ENCODE measurements at regions of chrX and their contacts with region 1.

Region 1: DNA sequence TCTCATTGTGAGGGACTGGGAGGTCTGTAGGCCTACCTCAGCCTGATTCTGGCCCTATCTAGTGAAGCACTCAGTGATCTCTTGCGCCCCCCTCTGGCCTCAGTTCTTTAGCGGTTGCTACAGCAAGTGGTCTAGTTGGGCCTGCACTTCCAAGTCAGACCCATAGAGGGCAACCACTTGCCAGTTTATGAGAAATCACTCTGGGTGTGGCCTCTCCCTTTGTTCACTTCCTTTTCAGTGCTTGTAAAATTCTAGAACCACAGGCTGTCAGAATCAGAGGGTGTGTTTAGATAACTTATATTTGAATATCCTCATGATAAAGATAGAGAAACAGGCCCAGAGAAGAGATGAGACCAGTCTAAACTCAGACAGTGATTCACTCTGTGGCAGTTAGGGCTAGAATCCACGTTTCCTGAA is 60.9 kb upstream of the LAS1L start:
- DNase-seq: peak; percentile 84 to 96 (median 85)
- ATAC-seq: peak; percentile 96
- H3K4me3 ChIP-seq: no peak overlapping the region
- H3K27ac ChIP-seq: peak overlapping the region; percentile 22; the same call in 2 of the 3 replicates
- H3K4me1 ChIP-seq: peaks cover 4 to 25% of the 10 kb centered on the region in 2 experiments; a peak in 3 of 5 replicates
- H3K27me3 ChIP-seq: no peaks in the 10 kb centered on the region
- CTCF ChIP-seq: peak; percentile 99 to 100 (median 100)
- EP300 ChIP-seq: peak; percentile 22; the same call in 1 of the 2 replicates
- POLR2A ChIP-seq: no peak
- RAD21 ChIP-seq: peak; percentile 93 to 96

Region 2: GRCh38 chrX:65581661-65582339 is 13.7 kb before region 1 on chrX:
- CTCF ChIA-PET with region 1: interaction called, 14 read pairs
- POLR2A ChIA-PET with region 1: interaction called, 5 read pairs
- in situ Hi-C with region 1: no loop called
- intact Hi-C with region 1: loop called (anchors 1 kb)
- DNase-seq: peak; percentile 53 to 80 (median 60)
- ATAC-seq: peak; percentile 93
- H3K4me3 ChIP-seq: no peak overlapping the region
- H3K27ac ChIP-seq: peak overlapping the region; percentile 62; the same call in 2 of the 3 replicates
- H3K4me1 ChIP-seq: peaks cover 4 to 12% of the 10 kb centered on the region in 2 experiments; a peak in 4 of 5 replicates
- H3K27me3 ChIP-seq: no peaks in the 10 kb centered on the region
- CTCF ChIP-seq: peak; percentile 74 to 90 (median 77)
- EP300 ChIP-seq: no peak
- POLR2A ChIP-seq: no peak
- RAD21 ChIP-seq: peak; percentile 86 to 89

Region 3: GRCh38 chrX:65667503-65668376 is 72.3 kb after region 1 on chrX and contains the start of gene MSN:
- CTCF ChIA-PET with region 1: no interaction called
- POLR2A ChIA-PET with region 1: interaction called, 5 read pairs
- in situ Hi-C with region 1: no loop called
- intact Hi-C with region 1: loop called (anchors 1 kb)
- DNase-seq: peak; percentile 78 to 84 (median 84)
- ATAC-seq: peak; percentile 92
- H3K4me3 ChIP-seq: peak within 1 kb of the TSS; percentile 90
- H3K27ac ChIP-seq: peak within 1 kb of the TSS; percentile 100
- H3K4me1 ChIP-seq: peaks cover 10 to 26% of the 10 kb centered on the region in 2 experiments; a peak in 4 of 5 replicates
- H3K27me3 ChIP-seq: no peaks in the 10 kb centered on the region
- CTCF ChIP-seq: 0 out of 6 replicates have a peak, but pooled peaks of 1 of the 3 experiments have one; percentile 5
- EP300 ChIP-seq: no peak
- POLR2A ChIP-seq: peak; percentile 82
- RAD21 ChIP-seq: peak; percentile 14 to 28; a peak in 1 of 4 replicates
- polyA plus RNA-seq, gene MSN: 128 to 283 TPM

Region 4: GRCh38 chrX:65723706-65724105 is 128.2 kb after region 1 on chrX:
- CTCF ChIA-PET with region 1: no interaction called
- POLR2A ChIA-PET with region 1: no interaction called
- in situ Hi-C with region 1: no loop called
- intact Hi-C with region 1: loop called (anchors 5 kb)
- DNase-seq: no peak
- ATAC-seq: no peak
- H3K4me3 ChIP-seq: no peak overlapping the region
- H3K27ac ChIP-seq: no peak overlapping the region
- H3K4me1 ChIP-seq: peaks cover 0 to 3% of the 10 kb centered on the region in 2 experiments; a peak in 2 of 5 replicates
- H3K27me3 ChIP-seq: no peaks in the 10 kb centered on the region
- CTCF ChIP-seq: no peak
- EP300 ChIP-seq: no peak
- POLR2A ChIP-seq: no peak
- RAD21 ChIP-seq: no peak

Region 5: DNA sequence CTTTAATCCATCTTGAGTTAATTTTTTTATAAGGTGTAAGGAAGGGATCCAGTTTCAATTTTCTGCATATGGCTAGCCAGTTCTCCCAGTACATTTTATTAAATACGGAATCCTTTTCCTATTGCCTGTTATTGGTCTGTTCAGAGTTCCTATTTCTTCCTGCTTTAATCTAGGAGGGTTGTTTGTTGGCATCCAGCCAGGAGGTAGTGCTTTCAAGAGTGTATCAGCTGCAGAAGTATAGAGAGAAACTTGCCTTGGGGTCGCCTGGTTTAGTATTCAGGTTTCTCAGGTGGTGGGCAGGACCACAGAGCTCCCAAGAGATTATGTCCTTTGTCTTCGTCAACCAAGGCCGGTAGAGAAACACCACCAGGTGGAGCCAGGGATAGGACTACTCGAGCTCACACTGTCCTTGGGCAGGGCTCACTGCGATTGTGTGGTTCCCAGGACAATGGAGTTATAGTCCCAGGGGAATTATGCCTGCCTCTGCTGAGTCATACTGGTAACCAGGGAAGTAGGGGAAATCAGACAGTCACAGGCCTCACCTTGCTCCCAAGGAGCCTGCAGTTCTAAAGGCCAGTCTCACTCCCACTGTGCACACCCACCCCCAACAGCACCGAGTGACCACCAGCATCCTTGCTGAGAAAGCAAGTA is 276.3 kb after region 1 on chrX:
- CTCF ChIA-PET with region 1: no interaction called
- POLR2A ChIA-PET with region 1: no interaction called
- in situ Hi-C with region 1: no loop called
- intact Hi-C with region 1: loop called (anchors 5 kb)
- DNase-seq: peak; percentile 24 to 68 (median 44)
- ATAC-seq: peak; percentile 83
- H3K4me3 ChIP-seq: no peak overlapping the region
- H3K27ac ChIP-seq: no peak overlapping the region
- H3K4me1 ChIP-seq: peaks cover 27 to 30% of the 10 kb centered on the region in 2 experiments; a peak in 4 of 5 replicates
- H3K27me3 ChIP-seq: no peaks in the 10 kb centered on the region
- CTCF ChIP-seq: peak; percentile 45 to 57 (median 54); a peak in 5 of 6 replicates
- EP300 ChIP-seq: no peak
- POLR2A ChIP-seq: no peak
- RAD21 ChIP-seq: peak; percentile 40 to 70

Region 6: DNA sequence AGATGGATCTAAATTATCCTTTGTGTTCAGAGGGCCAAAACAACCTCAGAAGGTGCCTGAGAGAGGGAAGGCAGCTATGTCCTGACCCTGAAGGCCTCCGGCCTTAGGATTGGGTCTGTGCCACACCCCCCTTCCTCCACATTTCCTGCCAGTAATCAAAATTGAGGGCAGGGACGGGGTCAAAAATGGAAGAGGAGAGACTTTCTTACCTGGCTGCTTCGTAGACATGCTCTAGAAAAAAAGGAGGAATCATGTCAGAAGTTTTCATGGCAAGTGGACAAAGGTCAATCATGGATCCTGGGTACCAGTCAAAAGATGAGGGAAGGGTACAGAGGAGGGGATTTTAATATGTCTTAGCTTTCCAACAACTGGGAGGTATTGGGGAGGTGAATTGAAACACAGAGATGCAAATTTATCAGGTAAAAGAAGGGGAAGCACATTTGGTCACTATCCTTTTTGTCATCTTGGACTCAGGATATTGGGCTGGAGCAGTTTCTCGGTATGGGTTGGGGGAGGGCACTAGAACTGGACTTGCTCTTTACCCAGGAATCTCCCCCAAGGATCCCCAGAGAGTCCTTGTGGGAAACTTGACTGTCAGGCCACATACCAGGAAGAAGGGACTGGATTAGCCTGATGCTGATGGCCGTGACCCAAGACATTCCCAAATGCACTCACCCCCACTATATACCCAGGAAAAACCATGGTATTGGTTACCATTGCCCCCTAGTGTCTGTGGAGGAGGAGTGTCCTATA is 427.3 kb after region 1 on chrX:
- CTCF ChIA-PET with region 1: no interaction called
- POLR2A ChIA-PET with region 1: no interaction called
- in situ Hi-C with region 1: no loop called
- intact Hi-C with region 1: no loop called
- DNase-seq: peak; percentile 45 to 73 (median 52)
- ATAC-seq: peak; percentile 62
- H3K4me3 ChIP-seq: no peak overlapping the region
- H3K27ac ChIP-seq: peak overlapping the region; percentile 52
- H3K4me1 ChIP-seq: peaks cover 13 to 54% of the 10 kb centered on the region in 2 experiments
- H3K27me3 ChIP-seq: no peaks in the 10 kb centered on the region
- CTCF ChIP-seq: peak; percentile 65 to 78 (median 72); a peak in 5 of 6 replicates
- EP300 ChIP-seq: peak; percentile 11; the same call in 1 of the 2 replicates
- POLR2A ChIP-seq: peak; percentile 57
- RAD21 ChIP-seq: peak; percentile 63 to 75

Region 7: DNA sequence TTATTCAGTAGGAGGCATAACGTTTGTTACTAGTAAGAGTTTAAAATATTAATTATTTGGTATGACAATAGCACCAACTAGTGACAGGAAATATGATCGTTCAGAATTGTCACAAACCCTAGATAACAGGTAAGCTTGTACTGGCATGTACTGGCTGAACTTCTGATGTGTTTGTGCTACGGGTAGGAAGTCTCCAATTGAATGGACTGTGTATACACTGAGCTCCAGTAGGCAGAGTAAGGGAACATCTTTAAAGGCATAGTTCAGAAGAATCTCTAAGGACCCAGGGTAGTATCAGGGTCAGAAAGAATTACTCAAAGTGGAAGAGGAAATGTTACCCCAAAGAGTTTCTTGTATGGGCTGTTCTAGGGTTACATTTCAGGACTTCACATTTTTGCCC is 813.0 kb after region 1 on chrX:
- CTCF ChIA-PET with region 1: no interaction called
- POLR2A ChIA-PET with region 1: no interaction called
- in situ Hi-C with region 1: loop called (anchors 25 kb)
- intact Hi-C with region 1: no loop called
- DNase-seq: peak; percentile 3 to 15 (median 4)
- ATAC-seq: peak; percentile 71
- H3K4me3 ChIP-seq: no peak overlapping the region
- H3K27ac ChIP-seq: no peak overlapping the region
- H3K4me1 ChIP-seq: no peaks in the 10 kb centered on the region
- H3K27me3 ChIP-seq: no peaks in the 10 kb centered on the region; a peak in 1 of 5 replicates
- CTCF ChIP-seq: peak in 2 of 3 experiments; percentile 13 to 56; a peak in 2 of 6 replicates
- EP300 ChIP-seq: no peak
- POLR2A ChIP-seq: no peak
- RAD21 ChIP-seq: peak in 1 of 2 experiments; percentile 54; a peak in 3 of 4 replicates

Region 8: GRCh38 chrX:66760657-66761056 is 1165.2 kb after region 1 on chrX:
- CTCF ChIA-PET with region 1: no interaction called
- POLR2A ChIA-PET with region 1: no interaction called
- in situ Hi-C with region 1: no loop called
- intact Hi-C with region 1: no loop called
- DNase-seq: peak in 2 of 4 experiments; percentile 0 to 4
- ATAC-seq: 0 out of 3 replicates have a peak, but pooled peaks have one; percentile 31
- H3K4me3 ChIP-seq: no peak overlapping the region
- H3K27ac ChIP-seq: no peak overlapping the region
- H3K4me1 ChIP-seq: no peaks in the 10 kb centered on the region
- H3K27me3 ChIP-seq: no peaks in the 10 kb centered on the region
- CTCF ChIP-seq: peak in 1 of 3 experiments; percentile 29; a peak in 1 of 6 replicates
- EP300 ChIP-seq: no peak
- POLR2A ChIP-seq: no peak
- RAD21 ChIP-seq: no peak

Measured in K562 (cell line).